HAP-1 (cell line): ENCODE measurements at regions of chr18 and their contacts with region 1.

Region 1: DNA sequence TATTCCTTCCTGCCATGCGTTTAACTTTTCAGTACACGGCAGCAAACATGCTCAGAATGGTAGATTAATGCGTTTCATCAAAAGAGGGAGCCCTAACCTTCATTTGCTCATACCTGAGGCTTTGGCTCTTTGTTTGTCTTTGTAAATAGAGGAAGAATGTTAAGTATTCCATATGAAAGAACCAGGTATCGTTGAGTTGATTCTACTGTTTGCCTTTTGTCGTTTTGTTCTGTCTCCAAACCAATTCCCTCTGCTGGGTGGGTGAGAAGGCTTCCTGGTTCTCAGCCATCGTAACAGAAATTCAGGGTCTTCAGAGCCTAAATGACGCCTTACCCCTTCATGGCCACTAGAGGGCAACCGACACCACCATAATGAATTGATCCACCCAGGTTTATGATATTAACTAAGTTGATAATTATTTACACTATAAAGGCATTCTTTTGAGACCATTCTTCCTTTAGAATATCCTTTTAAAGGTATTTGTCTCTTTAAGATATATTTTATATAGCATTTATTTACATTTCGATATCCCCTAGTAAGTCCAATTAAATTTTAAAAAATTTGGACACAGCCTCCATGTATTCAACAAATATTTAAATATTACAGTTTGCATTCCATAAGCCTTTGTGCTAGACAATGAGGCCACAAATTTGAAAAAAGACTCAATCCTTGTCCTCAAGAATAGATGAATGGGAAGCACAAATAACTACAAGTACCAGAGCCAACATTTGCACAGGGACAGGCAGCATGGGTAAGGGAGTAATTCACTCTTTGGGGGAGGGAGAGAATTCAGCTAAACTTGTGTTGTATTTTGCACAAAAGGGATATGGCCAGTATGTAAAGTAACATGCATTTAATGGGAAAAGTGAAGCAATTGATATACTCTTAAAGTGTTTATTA is 48.1 kb downstream of the TIMM21 start:
- DNase-seq: peak; percentile 36 to 72
- H3K4me3 ChIP-seq: no peak overlapping the region
- H3K4me1 ChIP-seq: peaks cover 3% of the 10 kb centered on the region
- H3K27me3 ChIP-seq: no peaks in the 10 kb centered on the region

Region 2: GRCh38 chr18:74495581-74496507 is 299.4 kb after region 1 on chr18 and contains the start of gene CNDP2:
- in situ Hi-C with region 1: loop called (anchors 25 kb)
- DNase-seq: peak; percentile 93 to 100
- H3K4me3 ChIP-seq: peak within 1 kb of the TSS; percentile 90
- H3K4me1 ChIP-seq: no peaks in the 10 kb centered on the region; the same call in 1 of the 2 replicates
- H3K27me3 ChIP-seq: no peaks in the 10 kb centered on the region

Region 3: DNA sequence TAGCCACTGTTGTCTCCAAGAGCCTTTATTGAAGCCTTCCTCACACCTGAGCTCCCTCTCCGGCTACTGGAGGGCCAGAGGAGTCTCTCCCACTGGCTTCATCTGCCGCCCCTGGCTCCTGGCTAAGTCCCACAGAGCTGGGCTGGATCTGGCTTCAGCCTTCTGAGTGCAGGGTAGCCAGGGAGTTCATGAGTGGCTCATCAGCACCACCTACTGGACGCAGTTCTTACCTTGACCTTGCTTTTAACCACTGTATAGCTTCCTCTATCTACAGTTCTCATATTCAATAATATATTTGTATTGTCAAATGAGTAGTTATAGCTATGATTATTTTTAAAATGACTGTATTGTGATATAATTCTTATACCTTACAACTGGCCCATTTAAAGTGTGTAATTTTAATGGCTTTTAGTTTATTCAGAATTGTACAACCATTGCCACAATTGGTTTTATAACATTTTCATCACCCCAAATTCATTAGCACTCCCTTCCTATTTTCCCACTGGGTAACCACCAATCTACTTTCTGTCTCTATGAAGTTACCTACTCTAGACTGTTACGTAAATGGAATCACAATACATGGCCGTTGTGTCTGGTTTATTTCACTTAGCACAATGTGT is 355.6 kb after region 1 on chr18:
- in situ Hi-C with region 1: loop called (anchors 5 kb)
- DNase-seq: peak; percentile 72 to 85
- H3K4me3 ChIP-seq: no peak overlapping the region
- H3K4me1 ChIP-seq: no peaks in the 10 kb centered on the region
- H3K27me3 ChIP-seq: no peaks in the 10 kb centered on the region